Activated B cell treated with CpG ODN at 0.5 μM for 24 hours (primary cell): ENCODE measurements at regions of chr15 and their contacts with region 1.

Region 1: DNA sequence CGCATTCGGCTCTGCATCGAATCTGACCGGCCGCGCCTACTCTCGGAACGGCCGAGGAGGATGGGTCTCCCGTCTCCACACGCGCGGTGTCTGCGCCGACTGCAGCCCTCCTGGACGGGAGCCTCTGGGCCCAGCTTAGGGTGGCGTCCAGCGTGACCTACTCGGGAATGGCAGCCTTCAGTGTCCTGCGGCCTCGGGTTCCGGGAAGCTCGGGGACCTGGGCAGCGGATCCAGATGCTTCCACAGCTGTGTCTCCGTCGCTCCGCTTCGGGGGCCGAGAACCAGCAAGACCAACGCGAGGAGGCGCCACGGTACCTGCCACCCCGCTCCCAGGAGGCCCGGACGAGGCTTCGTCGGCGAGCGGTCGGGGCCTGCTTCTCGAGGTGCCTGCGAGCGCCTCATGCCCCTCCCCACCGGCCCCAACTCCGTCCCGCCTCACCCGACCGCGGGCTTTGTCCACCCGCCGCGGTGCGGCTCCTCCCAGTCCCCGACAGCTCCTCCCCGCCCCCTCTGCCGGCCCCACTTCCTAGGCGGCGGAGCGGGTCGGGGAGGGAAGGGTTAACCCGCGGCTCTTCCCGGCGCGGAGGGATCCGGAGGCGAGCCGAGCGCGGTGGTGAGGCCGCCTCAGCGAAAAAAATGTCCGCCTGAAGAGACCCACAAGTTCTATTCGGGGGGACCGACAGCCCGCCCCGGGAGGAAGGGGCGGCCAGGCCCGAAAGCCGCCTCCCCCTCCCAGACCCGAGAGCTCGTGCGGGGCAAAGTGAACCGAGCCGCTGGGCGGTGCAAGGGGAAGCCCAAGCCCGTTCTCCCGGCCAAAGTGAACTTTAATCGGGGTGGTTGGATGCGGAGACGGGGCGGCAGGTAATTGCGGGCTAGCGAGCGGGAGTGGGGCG is at the start of gene TCF12:
- DNase-seq: peak; percentile 92
- ATAC-seq: peak; percentile 81
- H3K4me3 Mint-ChIP-seq: peak within 1 kb of the TSS; percentile 92
- H3K27ac Mint-ChIP-seq: peak within 1 kb of the TSS; percentile 80
- H3K4me1 Mint-ChIP-seq: peaks cover 32% of the 10 kb centered on the region
- H3K27me3 Mint-ChIP-seq: no peaks in the 10 kb centered on the region
- CTCF ChIP-seq: no peak
- total RNA-seq, gene TCF12: 88.5 and 119 TPM in 2 replicates

Region 2: DNA sequence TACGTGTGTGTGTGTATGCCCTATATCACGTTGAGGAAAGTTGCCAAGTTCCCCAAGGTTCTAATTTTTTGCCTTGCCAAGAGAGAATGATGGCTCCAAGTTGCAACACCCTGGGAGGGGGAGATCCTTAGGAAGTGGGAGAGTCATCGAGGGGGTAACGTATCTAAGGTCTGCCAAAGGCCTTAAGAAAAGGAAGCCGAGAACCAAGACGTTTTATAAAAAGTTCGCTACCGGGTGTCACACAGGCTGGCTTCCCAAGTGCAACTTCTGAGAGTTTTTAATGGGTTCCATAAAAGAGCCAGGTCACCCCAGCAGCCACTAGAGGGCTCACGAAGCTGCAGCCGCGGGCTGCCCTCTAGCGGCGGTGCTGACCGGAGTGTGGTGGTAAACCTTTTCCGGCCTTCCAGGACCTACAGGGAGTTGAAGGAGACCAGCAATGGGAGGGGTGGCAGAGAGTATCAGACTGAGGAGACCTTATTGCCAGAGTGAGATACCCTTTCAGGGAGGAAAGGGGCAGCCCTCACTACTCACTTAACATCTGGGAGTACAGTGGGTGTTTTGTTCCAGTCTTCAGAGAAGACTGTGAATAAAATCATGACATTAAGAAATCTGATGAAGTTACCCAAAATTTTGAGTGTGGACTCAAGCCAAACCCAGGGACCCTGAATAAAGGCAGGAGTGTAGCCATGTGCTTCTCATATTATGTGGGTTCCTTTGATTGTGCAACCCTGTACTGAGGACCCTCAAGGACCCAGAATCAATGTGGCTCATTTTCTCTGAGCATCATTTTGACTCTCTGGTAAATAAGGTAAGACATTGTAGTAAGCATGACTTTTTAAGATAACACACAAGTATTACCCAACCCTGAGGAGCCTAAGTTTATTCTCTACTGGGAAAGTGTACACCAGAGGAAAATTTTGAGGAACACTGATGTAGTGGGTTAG is 672.1 kb before region 1 on chr15:
- CTCF ChIA-PET with region 1: no interaction called
- POLR2A ChIA-PET with region 1: no interaction called
- intact Hi-C with region 1: loop called (anchors 2 kb)
- DNase-seq: peak; percentile 78
- ATAC-seq: peak; percentile 70
- H3K4me3 Mint-ChIP-seq: peak overlapping the region; percentile 88
- H3K27ac Mint-ChIP-seq: peak overlapping the region; percentile 94
- H3K4me1 Mint-ChIP-seq: peaks cover 37% of the 10 kb centered on the region
- H3K27me3 Mint-ChIP-seq: no peaks in the 10 kb centered on the region
- CTCF ChIP-seq: peak; percentile 97

Region 3: DNA sequence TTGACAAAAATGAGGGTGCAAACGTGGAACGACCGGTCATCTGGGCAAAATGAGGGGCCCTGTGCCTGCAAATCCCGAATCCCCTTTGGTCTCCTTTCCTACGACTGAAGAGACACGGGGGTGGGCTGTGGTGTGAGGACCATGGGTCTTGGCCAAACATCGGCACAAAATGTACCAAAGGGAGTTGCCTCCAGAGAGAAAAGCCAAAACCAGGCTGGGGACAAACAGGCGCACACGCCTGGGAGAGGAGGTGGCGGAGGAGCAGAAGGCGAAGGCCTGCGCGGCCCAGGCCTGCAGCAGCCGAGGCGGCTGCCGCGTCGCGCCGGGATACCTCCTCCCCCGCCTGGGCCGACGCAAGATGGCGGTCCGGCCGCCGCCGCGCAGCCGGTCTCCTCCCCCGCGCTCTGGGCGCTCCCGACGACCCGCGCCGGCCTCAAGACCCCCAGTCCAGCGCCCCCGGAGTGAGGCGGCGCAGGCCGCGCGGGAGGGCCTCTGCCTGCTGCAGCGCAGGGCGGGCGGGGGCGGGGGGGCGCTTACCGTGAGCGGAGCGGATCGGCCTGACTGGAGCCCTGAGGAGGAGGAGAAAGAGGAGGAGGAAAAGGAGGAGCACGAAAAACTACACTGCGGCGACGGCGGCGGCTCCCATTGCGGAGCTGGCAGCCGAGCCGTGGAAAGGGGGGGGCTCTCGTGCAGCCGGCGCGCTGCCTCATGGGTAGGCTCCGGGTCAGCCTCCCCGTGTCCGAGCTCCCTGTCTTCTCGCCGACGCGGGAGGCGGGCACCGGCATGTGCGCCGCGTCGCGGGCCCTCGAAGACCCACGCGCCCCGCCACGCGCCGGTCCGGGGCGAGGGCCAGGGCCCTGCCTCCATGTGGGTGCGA is 185.1 kb before region 1 on chr15 and contains the start of gene ZNF280D:
- CTCF ChIA-PET with region 1: no interaction called
- POLR2A ChIA-PET with region 1: interaction called, 7 read pairs
- intact Hi-C with region 1: loop called (anchors 1 kb)
- DNase-seq: peak; percentile 70
- ATAC-seq: peak; percentile 87
- H3K4me3 Mint-ChIP-seq: peak within 1 kb of the TSS; percentile 96
- H3K27ac Mint-ChIP-seq: peak within 1 kb of the TSS; percentile 93
- H3K4me1 Mint-ChIP-seq: peaks cover 31% of the 10 kb centered on the region
- H3K27me3 Mint-ChIP-seq: no peaks in the 10 kb centered on the region
- CTCF ChIP-seq: no peak
- total RNA-seq, gene ZNF280D: 37.9 and 40.0 TPM in 2 replicates

Region 4: DNA sequence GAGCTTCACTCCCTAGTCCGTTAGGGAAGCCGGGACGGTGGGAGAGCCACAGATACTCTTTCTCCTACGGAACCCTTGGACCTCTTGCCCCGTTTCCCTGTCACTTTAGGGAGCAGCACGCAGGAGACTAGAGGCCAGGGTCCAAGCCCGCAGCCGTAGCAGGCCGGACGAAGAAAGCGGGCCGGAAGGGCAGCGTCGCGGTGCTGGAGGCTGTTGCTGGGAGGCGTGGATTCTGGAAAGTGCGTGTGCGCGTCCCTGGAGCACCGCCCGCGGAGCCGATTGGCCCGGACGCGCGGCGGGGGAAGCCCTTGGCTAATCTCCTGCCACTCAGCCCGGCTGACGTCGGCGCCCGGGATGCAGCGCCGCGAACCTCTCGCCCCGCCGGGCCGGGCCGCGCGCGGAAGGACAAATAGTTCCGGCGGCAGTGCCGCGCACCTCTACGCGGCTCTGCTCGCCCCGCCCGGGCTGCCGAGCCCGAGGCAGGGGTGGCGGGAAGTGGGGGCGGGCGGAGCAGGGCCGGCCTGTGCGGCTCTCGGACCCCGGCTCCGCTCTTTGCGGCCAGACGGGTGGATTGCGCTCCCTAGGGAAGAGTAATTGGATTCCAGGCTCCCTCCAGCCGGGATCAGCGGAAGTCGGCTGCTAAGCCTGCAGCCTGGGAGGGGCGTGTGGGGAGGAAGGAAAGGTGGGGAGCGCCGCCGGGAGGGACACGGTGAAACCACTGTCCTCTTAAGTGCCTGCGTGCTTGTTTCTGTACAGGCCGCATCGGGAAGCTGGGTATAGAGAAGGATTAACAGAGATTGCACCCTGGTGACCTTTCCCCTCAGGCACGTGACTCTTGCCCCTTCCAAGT is 31.1 kb before region 1 on chr15:
- CTCF ChIA-PET with region 1: interaction called, 6 read pairs
- POLR2A ChIA-PET with region 1: interaction called, 84 read pairs
- intact Hi-C with region 1: loop called (anchors 1 kb)
- DNase-seq: peak; percentile 81
- ATAC-seq: peak; percentile 85
- H3K4me3 Mint-ChIP-seq: peak overlapping the region; percentile 87
- H3K27ac Mint-ChIP-seq: peak overlapping the region; percentile 91
- H3K4me1 Mint-ChIP-seq: peaks cover 28% of the 10 kb centered on the region
- H3K27me3 Mint-ChIP-seq: no peaks in the 10 kb centered on the region
- CTCF ChIP-seq: no peak

Region 5: DNA sequence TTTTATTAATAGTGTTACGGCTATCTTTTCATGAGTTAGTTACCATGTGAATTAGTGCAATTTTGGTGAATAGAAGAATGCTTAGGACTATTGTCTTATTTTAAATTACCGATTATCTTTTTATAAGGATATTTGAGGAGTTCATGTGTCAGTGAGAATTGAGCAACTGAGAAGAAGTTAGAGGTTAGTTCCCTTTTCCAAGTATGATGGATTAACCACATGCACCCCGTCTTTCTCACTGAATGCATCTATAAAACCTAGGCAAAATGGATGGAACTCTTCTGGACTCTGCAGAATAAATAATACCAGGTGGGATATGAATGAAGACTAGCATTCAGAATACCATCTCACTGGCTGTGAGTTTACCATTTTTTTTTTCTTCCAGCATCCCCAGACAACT is 74.4 kb after region 1 on chr15:
- CTCF ChIA-PET with region 1: no interaction called
- POLR2A ChIA-PET with region 1: no interaction called
- intact Hi-C with region 1: no loop called
- DNase-seq: no peak
- ATAC-seq: no peak
- H3K4me3 Mint-ChIP-seq: no peak overlapping the region
- H3K27ac Mint-ChIP-seq: no peak overlapping the region
- H3K4me1 Mint-ChIP-seq: peaks cover 10% of the 10 kb centered on the region
- H3K27me3 Mint-ChIP-seq: no peaks in the 10 kb centered on the region
- CTCF ChIP-seq: no peak

Region 6: DNA sequence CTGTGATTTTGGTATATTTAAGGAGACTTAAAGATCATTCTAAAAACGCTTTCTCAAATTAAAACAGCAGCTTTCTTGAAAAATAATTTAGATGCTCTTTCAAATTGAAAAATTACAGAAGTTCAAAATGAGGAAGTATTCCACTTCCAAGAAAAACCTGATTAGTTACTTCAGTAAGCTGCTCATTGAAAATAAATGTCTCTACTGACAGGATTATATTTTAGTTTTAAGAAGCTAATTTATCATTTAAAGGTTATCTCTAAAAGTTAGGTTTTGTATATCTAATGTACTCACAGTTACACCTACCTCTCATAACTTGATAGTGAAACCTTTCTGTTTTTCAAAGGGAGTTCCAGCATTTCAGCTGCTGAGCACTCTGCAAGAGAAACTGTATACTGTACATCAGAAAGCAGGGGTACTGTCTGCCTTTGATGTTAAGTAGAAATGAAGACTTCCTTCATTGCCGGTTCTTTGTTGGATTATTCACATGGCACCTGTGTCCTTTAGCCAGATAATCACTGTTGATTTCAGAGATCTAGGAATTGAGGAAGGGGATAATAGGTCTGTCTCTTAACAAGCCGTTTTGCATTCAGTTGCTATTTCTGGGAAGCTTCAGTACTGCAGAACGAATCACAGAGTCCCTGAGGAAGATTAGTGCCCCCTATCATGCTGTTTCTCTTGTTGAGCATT is 161.8 kb after region 1 on chr15:
- CTCF ChIA-PET with region 1: no interaction called
- POLR2A ChIA-PET with region 1: no interaction called
- intact Hi-C with region 1: loop called (anchors 5 kb)
- DNase-seq: no peak
- ATAC-seq: no peak
- H3K4me3 Mint-ChIP-seq: no peak overlapping the region
- H3K27ac Mint-ChIP-seq: no peak overlapping the region
- H3K4me1 Mint-ChIP-seq: peaks cover 19% of the 10 kb centered on the region
- H3K27me3 Mint-ChIP-seq: no peaks in the 10 kb centered on the region
- CTCF ChIP-seq: no peak

Region 7: DNA sequence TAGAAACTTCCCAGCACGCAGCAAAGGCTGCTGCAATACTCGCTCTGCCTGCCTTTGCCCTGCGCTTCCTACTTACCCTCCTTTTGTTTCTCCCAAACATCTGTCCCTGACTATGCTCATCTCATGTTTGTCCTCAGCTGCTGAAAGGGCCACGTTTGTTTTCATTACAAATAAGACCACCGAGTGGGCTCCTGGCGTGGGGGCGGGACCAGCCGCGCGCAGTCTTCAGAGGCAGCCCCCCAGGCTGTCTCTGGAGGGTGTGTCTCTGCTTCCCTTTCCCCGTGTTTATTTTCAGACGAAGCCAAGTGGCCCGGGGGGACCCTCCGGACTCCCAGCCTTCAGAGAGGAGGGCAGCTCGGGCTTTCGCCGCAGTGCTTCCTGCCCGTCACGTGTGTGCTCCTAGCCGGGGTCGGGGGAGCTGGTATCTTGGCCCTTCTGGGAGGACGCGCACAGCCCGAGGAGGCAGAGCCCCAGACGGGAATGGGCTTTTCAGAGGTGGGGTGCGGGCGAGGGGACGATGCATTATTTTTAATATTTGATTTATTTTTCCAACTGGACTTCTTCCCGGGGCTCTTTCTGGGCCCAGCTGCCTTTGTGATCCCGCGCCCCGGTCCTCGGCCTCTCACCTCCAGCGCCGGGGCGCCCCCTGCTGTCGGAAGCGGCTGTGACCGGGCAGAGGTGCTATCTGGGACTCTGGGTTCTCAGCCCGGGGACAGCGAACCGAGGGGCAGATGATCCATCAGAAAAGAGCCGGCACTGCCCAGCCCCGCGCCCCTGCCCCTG is 388.1 kb after region 1 on chr15:
- CTCF ChIA-PET with region 1: interaction called, 7 read pairs
- POLR2A ChIA-PET with region 1: interaction called, 7 read pairs
- intact Hi-C with region 1: loop called (anchors 1 kb)
- DNase-seq: peak; percentile 91
- ATAC-seq: peak; percentile 71
- H3K4me3 Mint-ChIP-seq: peak overlapping the region; percentile 90
- H3K27ac Mint-ChIP-seq: peak overlapping the region; percentile 88
- H3K4me1 Mint-ChIP-seq: peaks cover 76% of the 10 kb centered on the region
- H3K27me3 Mint-ChIP-seq: no peaks in the 10 kb centered on the region
- CTCF ChIP-seq: peak; percentile 45